ENCODE measurements at regions of chr17 and their contacts with region 1.

Region 1: DNA sequence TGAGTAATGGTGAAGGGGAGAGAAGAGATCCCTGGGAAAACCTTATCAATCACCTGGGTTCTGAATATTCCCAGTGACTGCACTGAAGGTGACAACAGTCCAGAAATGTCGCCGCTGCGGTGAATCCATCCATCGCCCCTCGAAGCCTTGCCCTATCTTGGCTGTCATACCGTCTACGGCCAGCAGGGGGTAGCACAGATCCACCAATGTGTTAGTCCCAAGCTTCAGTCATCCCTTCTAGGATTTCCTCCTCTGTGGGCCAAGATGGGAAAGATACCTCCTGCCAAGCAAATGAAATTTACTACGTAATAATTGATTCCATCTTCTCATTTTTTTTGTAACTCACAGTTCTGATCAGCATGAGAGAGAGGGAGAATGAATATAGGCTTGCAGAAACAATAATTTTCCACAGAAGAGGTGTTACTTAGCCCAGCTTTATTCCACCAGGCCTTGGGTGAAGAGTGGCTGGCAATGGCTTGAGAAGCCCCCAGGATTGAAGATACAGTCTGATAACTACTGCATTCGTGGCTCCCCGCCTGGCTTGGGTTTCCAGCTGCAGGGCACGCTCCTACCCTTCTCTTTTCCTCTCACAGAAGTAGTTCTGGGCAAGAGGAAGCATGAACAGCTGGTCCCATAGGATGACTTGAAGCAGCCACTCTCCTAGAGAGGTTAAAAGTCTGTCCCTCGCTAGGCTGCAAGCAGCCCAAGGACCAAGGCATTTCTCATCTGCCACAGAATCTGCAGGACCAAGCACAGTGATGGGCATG is 2.6 kb upstream of the FMNL1 start:
- DNase-seq: peak; percentile 48 to 92
- H3K4me3 ChIP-seq: no peak overlapping the region
- H3K27ac ChIP-seq: no peak overlapping the region
- H3K4me1 ChIP-seq: peaks cover 4 to 5% of the 10 kb centered on the region in 2 donors
- H3K27me3 ChIP-seq: peaks cover 5% of the 10 kb centered on the region
- CTCF ChIP-seq: peak; percentile 89 to 95 (median 90)

Region 2: GRCh38 chr17:45177563-45178169 is 41.4 kb before region 1 on chr17:
- intact Hi-C with region 1: no loop called
- DNase-seq: no peak
- H3K4me3 ChIP-seq: no peak overlapping the region
- H3K27ac ChIP-seq: peak overlapping the region in 1 of 2 donors; percentile 61
- H3K4me1 ChIP-seq: peaks cover 0 to 15% of the 10 kb centered on the region in 2 donors
- H3K27me3 ChIP-seq: no peaks in the 10 kb centered on the region
- CTCF ChIP-seq: no peak

Region 3: GRCh38 chr17:45235416-45236281 is 16.6 kb after region 1 on chr17:
- intact Hi-C with region 1: loop called (anchors 1 kb)
- DNase-seq: peak in 1 of 2 donors; percentile 84
- H3K4me3 ChIP-seq: no peak overlapping the region
- H3K27ac ChIP-seq: no peak overlapping the region
- H3K4me1 ChIP-seq: no peaks in the 10 kb centered on the region
- H3K27me3 ChIP-seq: no peaks in the 10 kb centered on the region
- CTCF ChIP-seq: peak; percentile 49 to 68 (median 62)

Region 4: GRCh38 chr17:45277216-45277849 is 58.3 kb after region 1 on chr17:
- intact Hi-C with region 1: loop called (anchors 2 kb)
- DNase-seq: peak; percentile 73 to 95
- H3K4me3 ChIP-seq: peak overlapping the region in 1 of 2 donors; percentile 42
- H3K27ac ChIP-seq: peak overlapping the region in 1 of 2 donors; percentile 40
- H3K4me1 ChIP-seq: peaks cover 0 to 11% of the 10 kb centered on the region in 2 donors
- H3K27me3 ChIP-seq: no peaks in the 10 kb centered on the region
- CTCF ChIP-seq: peak; percentile 80 to 86 (median 85)

Region 5: GRCh38 chr17:45293413-45294211 is 74.5 kb after region 1 on chr17:
- intact Hi-C with region 1: no loop called
- DNase-seq: peak; percentile 78 to 94
- H3K4me3 ChIP-seq: no peak overlapping the region
- H3K27ac ChIP-seq: peak overlapping the region; percentile 81 to 85
- H3K4me1 ChIP-seq: peaks cover 26 to 61% of the 10 kb centered on the region in 2 donors
- H3K27me3 ChIP-seq: no peaks in the 10 kb centered on the region
- CTCF ChIP-seq: peak in 1 of 3 experiments; percentile 21

Region 6: GRCh38 chr17:45385331-45385997 is 166.4 kb after region 1 on chr17:
- intact Hi-C with region 1: loop called (anchors 1 kb)
- DNase-seq: peak; percentile 44 to 90
- H3K4me3 ChIP-seq: no peak overlapping the region
- H3K27ac ChIP-seq: no peak overlapping the region
- H3K4me1 ChIP-seq: no peaks in the 10 kb centered on the region
- H3K27me3 ChIP-seq: no peaks in the 10 kb centered on the region
- CTCF ChIP-seq: peak; percentile 95 to 99 (median 98)

Region 7: GRCh38 chr17:45834471-45835396 is 615.7 kb after region 1 on chr17:
- intact Hi-C with region 1: loop called (anchors 10 kb)
- DNase-seq: no peak
- H3K4me3 ChIP-seq: no peak overlapping the region
- H3K27ac ChIP-seq: no peak overlapping the region
- H3K4me1 ChIP-seq: no peaks in the 10 kb centered on the region
- H3K27me3 ChIP-seq: no peaks in the 10 kb centered on the region
- CTCF ChIP-seq: no peak